ENCODE measurements at regions of chr1 and their contacts with region 1.

Region 1: GRCh38 chr1:235105051-235106043 is 23.3 kb downstream of the TOMM20 start:
- DNase-seq: no peak
- H3K4me3 ChIP-seq: no peak overlapping the region
- H3K27ac ChIP-seq: no peak overlapping the region
- H3K4me1 ChIP-seq: peaks cover 0 to 10% (median 9%) of the 10 kb centered on the region in 4 experiments
- H3K27me3 ChIP-seq: no peaks in the 10 kb centered on the region

Region 2: GRCh38 chr1:235122348-235122747 is 17.0 kb after region 1 on chr1:
- CTCF ChIA-PET with region 1: interaction called, 29 read pairs
- POLR2A ChIA-PET with region 1: interaction called, 6 read pairs
- DNase-seq: no peak
- H3K4me3 ChIP-seq: no peak overlapping the region
- H3K27ac ChIP-seq: no peak overlapping the region
- H3K4me1 ChIP-seq: peaks cover 8 to 14% (median 11%) of the 10 kb centered on the region in 4 experiments
- H3K27me3 ChIP-seq: no peaks in the 10 kb centered on the region

Region 3: GRCh38 chr1:235295902-235296376 is 190.6 kb after region 1 on chr1:
- CTCF ChIA-PET with region 1: no interaction called
- POLR2A ChIA-PET with region 1: no interaction called
- DNase-seq: no peak
- H3K4me3 ChIP-seq: no peak overlapping the region
- H3K27ac ChIP-seq: no peak overlapping the region
- H3K4me1 ChIP-seq: peaks cover 5 to 30% (median 11%) of the 10 kb centered on the region in 4 experiments
- H3K27me3 ChIP-seq: no peaks in the 10 kb centered on the region

Measured in common myeloid progenitor, CD34-positive (primary cell).